T-cell (primary cell): ENCODE measurements at regions of chr6 and their contacts with region 1.

Region 1: GRCh38 chr6:28281288-28282064 is at the start of gene PGBD1:
- DNase-seq: peak in 29 of 35 experiments; percentile 5 to 54 (median 25)
- ATAC-seq: peak; percentile 76 to 90 (median 87)
- H3K4me3 ChIP-seq: peak within 1 kb of the TSS; percentile 43 to 76
- H3K4me3 Mint-ChIP-seq: peak within 1 kb of the TSS; percentile 65 to 73 (median 67)
- H3K27ac ChIP-seq: no peak within 1 kb of the TSS
- H3K27ac Mint-ChIP-seq: no peak within 1 kb of the TSS
- H3K4me1 ChIP-seq: peaks cover 0 to 6% of the 10 kb centered on the region in 2 experiments
- H3K4me1 Mint-ChIP-seq: peaks cover 5 to 12% (median 11%) of the 10 kb centered on the region in 3 donors
- H3K27me3 ChIP-seq: peaks cover 0 to 18% of the 10 kb centered on the region in 2 experiments
- H3K27me3 Mint-ChIP-seq: peaks cover 30 to 34% of the 10 kb centered on the region in 2 donors
- total RNA-seq, gene PGBD1: 1.1 to 2.0 (median 1.2) TPM

Region 2: GRCh38 chr6:28355743-28356665 is 74.5 kb after region 1 on chr6:
- CTCF ChIA-PET with region 1: interaction called, 3 to 12 read pairs
- POLR2A ChIA-PET with region 1: no interaction called
- DNase-seq: peak in 34 of 35 experiments; percentile 14 to 83 (median 44)
- ATAC-seq: peak; percentile 78 to 86 (median 81)
- H3K4me3 ChIP-seq: peak overlapping the region; percentile 60 to 74
- H3K4me3 Mint-ChIP-seq: peak overlapping the region; percentile 85 to 91 (median 88)
- H3K27ac ChIP-seq: peak overlapping the region; percentile 39
- H3K27ac Mint-ChIP-seq: peak overlapping the region; percentile 71 to 83
- H3K4me1 ChIP-seq: peaks cover 6 to 23% of the 10 kb centered on the region in 2 experiments
- H3K4me1 Mint-ChIP-seq: peaks cover 33 to 37% (median 37%) of the 10 kb centered on the region in 3 donors
- H3K27me3 ChIP-seq: no peaks in the 10 kb centered on the region
- H3K27me3 Mint-ChIP-seq: no peaks in the 10 kb centered on the region